BJ (cell line): ENCODE measurements at regions of chr5 and their contacts with region 1.

Region 1: GRCh38 chr5:18380729-18381362 is 746.6 kb downstream of the TAF11L14 start:
- DNase-seq: no peak
- H3K4me3 ChIP-seq: no peak overlapping the region
- H3K27me3 ChIP-seq: no peaks in the 10 kb centered on the region
- CTCF ChIP-seq: no peak

Region 2: GRCh38 chr5:18393589-18394442 is 13.0 kb after region 1 on chr5:
- CTCF ChIA-PET with region 1: interaction called, 10 read pairs
- POLR2A ChIA-PET with region 1: no interaction called
- DNase-seq: no peak
- H3K4me3 ChIP-seq: no peak overlapping the region
- H3K27me3 ChIP-seq: no peaks in the 10 kb centered on the region
- CTCF ChIP-seq: peak; percentile 65